Panc1 (cell line): ENCODE measurements at regions of chr12 and their contacts with region 1.

Region 1: DNA sequence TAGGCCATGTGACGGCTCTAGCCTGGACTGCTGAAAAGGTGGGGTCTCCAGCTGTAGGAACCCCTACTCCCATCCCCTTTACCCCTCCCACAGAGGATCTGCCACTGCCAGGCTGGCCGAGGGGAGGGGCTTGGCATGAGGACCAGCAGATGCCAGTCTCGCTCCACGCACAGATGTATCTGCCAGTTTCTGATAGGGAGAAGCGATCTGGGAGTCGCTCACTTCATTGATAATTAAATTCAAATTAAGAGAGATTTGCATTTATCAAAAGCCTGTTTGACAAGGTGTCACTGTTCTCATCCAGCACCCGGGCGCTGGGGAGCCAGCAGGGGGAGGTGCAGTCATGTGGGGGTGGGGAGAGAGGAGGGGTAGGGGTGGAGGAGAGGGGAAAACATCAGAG is 217.6 kb upstream of the MYL2 start:
- DNase-seq: no peak
- ATAC-seq: no peak
- H3K4me3 ChIP-seq: no peak overlapping the region
- H3K27ac ChIP-seq: no peak overlapping the region
- H3K4me1 ChIP-seq: no peaks in the 10 kb centered on the region
- H3K27me3 ChIP-seq: peaks cover 4% of the 10 kb centered on the region
- CTCF ChIP-seq: no peak

Region 2: DNA sequence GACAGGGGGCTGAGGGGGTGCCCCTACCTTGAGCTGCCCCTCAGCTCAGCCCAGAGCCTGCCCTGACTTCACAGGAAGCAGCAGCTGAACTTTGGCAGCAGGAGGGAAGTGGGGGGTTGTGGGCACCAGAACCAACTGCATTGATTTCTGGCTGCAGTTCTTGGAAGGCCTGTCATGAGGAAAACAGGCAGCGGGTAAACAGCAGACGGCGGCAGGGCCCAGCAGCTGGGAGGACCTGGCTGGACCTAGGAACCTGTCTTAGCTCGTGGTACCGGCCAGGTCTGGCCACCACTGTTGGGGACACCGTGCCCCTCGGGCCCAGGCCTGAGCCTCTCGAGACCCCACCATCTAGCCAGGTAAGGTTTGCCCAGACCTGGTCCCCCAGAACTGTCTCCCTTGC is 63.5 kb before region 1 on chr12:
- CTCF ChIA-PET with region 1: no interaction called
- POLR2A ChIA-PET with region 1: interaction called, 11 read pairs
- in situ Hi-C with region 1: no loop called
- intact Hi-C with region 1: no loop called
- DNase-seq: no peak
- ATAC-seq: no peak
- H3K4me3 ChIP-seq: no peak overlapping the region
- H3K27ac ChIP-seq: no peak overlapping the region
- H3K4me1 ChIP-seq: no peaks in the 10 kb centered on the region
- H3K27me3 ChIP-seq: no peaks in the 10 kb centered on the region
- CTCF ChIP-seq: no peak

Region 3: GRCh38 chr12:111149299-111149698 is 11.3 kb after region 1 on chr12:
- CTCF ChIA-PET with region 1: no interaction called
- POLR2A ChIA-PET with region 1: no interaction called
- in situ Hi-C with region 1: no loop called
- intact Hi-C with region 1: no loop called
- DNase-seq: no peak
- ATAC-seq: no peak
- H3K4me3 ChIP-seq: no peak overlapping the region
- H3K27ac ChIP-seq: no peak overlapping the region
- H3K4me1 ChIP-seq: no peaks in the 10 kb centered on the region
- H3K27me3 ChIP-seq: peaks cover 4% of the 10 kb centered on the region; the same call in 1 of the 2 replicates
- CTCF ChIP-seq: no peak; the same call in 1 of the 2 replicates